ENCODE measurements at regions of chr1 and their contacts with region 1.

Region 1: GRCh38 chr1:89524369-89525168 is at the start of gene LRRC8B:
- DNase-seq: peak; percentile 94
- ATAC-seq: peak; percentile 71
- H3K4me3 Mint-ChIP-seq: no peak within 1 kb of the TSS
- H3K27ac Mint-ChIP-seq: no peak within 1 kb of the TSS
- H3K4me1 Mint-ChIP-seq: peaks cover 24% of the 10 kb centered on the region
- H3K27me3 Mint-ChIP-seq: no peaks in the 10 kb centered on the region
- total RNA-seq, gene LRRC8B: 38.9 to 41.5 TPM

Region 2: GRCh38 chr1:89483010-89483756 is 41.4 kb before region 1 on chr1:
- CTCF ChIA-PET with region 1: interaction called, 10 read pairs
- POLR2A ChIA-PET with region 1: no interaction called
- intact Hi-C with region 1: loop called (anchors 2 to 5 kb)
- DNase-seq: peak; percentile 91
- ATAC-seq: peak; percentile 86
- H3K4me3 Mint-ChIP-seq: no peak overlapping the region
- H3K27ac Mint-ChIP-seq: no peak overlapping the region
- H3K4me1 Mint-ChIP-seq: peaks cover 21% of the 10 kb centered on the region
- H3K27me3 Mint-ChIP-seq: no peaks in the 10 kb centered on the region

Region 3: GRCh38 chr1:89547563-89548485 is 23.3 kb after region 1 on chr1:
- CTCF ChIA-PET with region 1: interaction called, 4 read pairs
- POLR2A ChIA-PET with region 1: interaction called, 4 read pairs
- intact Hi-C with region 1: loop called (anchors 1 kb)
- DNase-seq: peak; percentile 70
- ATAC-seq: peak; percentile 48
- H3K4me3 Mint-ChIP-seq: peak overlapping the region; percentile 20
- H3K27ac Mint-ChIP-seq: peak overlapping the region; percentile 95
- H3K4me1 Mint-ChIP-seq: peaks cover 86% of the 10 kb centered on the region
- H3K27me3 Mint-ChIP-seq: no peaks in the 10 kb centered on the region

Region 4: DNA sequence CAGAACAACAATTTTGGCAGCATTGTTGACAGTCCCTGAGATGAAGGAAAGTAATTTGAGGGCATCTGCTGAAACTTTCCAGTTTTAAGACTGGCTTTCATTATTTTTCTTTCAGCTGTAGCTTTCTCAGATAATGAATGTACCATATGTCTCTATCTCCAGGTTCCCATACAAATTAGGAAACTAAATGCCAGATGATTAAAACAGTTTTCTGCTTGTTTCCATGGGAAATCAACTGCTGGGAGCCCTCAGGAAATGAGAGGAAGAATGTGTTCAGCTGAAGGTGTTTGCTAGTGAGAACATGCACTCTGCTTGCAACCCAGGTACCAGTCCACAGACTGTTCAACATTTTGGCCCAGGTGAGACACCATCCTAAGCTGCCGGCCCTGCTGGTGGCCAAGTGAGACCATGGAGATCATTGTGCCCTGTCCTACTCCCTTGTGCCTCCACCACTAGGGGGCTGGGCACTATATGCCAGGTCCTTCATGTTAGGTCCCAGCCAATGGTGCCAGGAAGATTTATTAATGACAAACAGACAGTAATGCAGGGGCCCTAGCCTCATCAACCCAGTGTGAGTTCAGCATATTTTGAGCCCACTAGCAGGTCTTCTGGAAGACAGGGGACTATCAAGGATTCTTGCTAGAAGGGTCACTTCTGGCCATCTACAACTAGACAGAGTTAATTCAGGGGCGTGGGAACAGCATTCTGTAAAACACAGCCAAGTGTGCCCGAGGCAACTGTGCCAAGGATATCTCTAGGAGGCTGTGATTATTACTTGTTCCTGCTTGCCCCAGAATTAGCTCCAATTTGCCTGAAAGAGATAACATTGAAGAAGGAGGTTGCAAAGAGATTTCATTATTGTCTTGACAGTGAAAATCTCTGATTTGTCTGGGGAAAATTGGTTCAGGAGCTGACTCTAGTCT is 91.4 kb after region 1 on chr1:
- CTCF ChIA-PET with region 1: interaction called, 3 read pairs
- POLR2A ChIA-PET with region 1: no interaction called
- intact Hi-C with region 1: loop called in 1 of 2 experiments (anchors 1 kb)
- DNase-seq: peak; percentile 46
- ATAC-seq: no peak
- H3K4me3 Mint-ChIP-seq: no peak overlapping the region
- H3K27ac Mint-ChIP-seq: no peak overlapping the region
- H3K4me1 Mint-ChIP-seq: peaks cover 86% of the 10 kb centered on the region
- H3K27me3 Mint-ChIP-seq: no peaks in the 10 kb centered on the region

Region 5: DNA sequence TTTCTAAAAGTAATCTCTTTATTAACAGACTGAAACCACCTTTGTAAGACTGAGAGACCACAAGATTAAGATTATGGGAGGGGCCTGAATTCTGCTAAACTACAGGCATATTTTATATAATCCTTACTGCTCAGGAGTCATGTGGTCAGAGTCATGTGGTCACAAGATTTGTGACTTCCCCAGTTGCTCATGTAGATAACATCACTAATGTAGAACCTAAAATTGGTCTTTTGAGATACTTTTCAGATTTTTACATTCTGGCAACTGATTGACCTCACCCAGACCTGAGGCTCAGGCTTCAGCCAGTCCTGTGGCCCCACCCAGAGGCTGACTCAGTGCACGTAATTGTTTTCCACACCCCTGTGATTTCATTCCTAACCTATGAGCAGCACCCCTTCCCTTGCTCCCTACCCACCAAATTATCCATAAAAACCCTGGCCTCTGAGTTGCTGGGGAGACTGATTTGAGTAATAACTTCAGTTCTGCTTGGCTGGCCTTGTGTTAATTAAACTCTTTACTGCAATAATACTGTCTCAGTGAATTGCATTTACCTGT is 428.6 kb after region 1 on chr1:
- CTCF ChIA-PET with region 1: no interaction called
- POLR2A ChIA-PET with region 1: no interaction called
- intact Hi-C with region 1: no loop called
- DNase-seq: peak; percentile 65
- ATAC-seq: peak; percentile 76
- H3K4me3 Mint-ChIP-seq: no peak overlapping the region
- H3K27ac Mint-ChIP-seq: no peak overlapping the region
- H3K4me1 Mint-ChIP-seq: peaks cover 25% of the 10 kb centered on the region
- H3K27me3 Mint-ChIP-seq: no peaks in the 10 kb centered on the region

Region 6: DNA sequence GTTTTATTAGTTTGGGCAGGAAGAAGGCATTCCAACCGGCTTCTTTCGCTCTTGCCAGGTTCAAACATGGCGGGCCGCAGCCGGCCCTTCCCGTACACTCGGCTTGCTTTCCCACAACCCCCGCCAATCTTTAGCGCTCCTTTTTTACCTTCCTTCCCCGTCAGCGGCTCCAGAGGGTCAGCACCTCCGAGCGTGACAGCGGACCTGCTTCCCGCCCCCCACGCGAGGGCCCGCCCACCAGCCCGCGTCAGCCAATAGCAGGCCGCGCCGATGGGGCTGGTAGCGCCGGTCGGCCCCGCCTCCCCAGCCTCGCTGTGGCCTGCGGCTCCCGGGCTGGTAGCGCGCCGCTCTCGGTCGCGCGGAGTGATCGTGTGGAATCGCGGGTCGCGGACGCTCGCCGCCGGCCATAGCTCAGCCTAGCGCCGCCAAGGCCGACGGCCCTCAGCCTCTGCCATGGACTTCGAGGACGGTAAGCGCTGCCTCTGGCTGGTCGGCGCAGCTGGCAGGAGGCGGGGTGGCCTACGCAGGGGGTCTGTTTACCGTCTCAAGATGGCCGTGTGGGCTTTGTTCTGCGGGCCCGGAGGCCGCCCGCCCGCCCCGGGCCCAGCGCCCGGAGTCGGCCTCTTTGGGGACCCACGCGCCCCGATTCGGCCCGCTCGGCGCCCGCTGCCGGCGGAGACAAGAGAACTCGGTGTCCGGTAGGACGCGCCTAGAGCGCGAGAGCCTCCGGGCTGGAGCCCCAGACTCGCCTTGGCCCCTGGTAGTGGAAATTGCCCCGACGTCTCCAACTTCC is 470.4 kb after region 1 on chr1 and contains the start of gene ZNF326:
- CTCF ChIA-PET with region 1: interaction called, 3 read pairs
- POLR2A ChIA-PET with region 1: no interaction called
- intact Hi-C with region 1: loop called (anchors 1 to 5 kb)
- DNase-seq: peak; percentile 97
- ATAC-seq: peak; percentile 95
- H3K4me3 Mint-ChIP-seq: peak within 1 kb of the TSS; percentile 94
- H3K27ac Mint-ChIP-seq: peak within 1 kb of the TSS; percentile 92
- H3K4me1 Mint-ChIP-seq: peaks cover 42% of the 10 kb centered on the region
- H3K27me3 Mint-ChIP-seq: no peaks in the 10 kb centered on the region
- total RNA-seq, gene ZNF326: 19.4 to 20.5 TPM